Activated naive CD4-positive, alpha-beta T cell treated with anti-CD3 and anti-CD28 coated beads, Interleukin-2, amount 10 ng/mL, durations not matched to agents 7 days and 5 days (primary cell): ENCODE measurements at regions of chr11 and their contacts with region 1.

Region 1: GRCh38 chr11:75445315-75445953 is 12.4 kb upstream of the KLHL35 start:
- DNase-seq: peak; percentile 82
- H3K4me3 Mint-ChIP-seq: no peak overlapping the region
- H3K27ac Mint-ChIP-seq: no peak overlapping the region
- H3K4me1 Mint-ChIP-seq: no peaks in the 10 kb centered on the region
- H3K27me3 Mint-ChIP-seq: peaks cover 10% of the 10 kb centered on the region

Region 2: GRCh38 chr11:75462117-75462812 is 16.8 kb after region 1 on chr11:
- CTCF ChIA-PET with region 1: interaction called, 10 read pairs
- DNase-seq: no peak
- H3K4me3 Mint-ChIP-seq: no peak overlapping the region
- H3K27ac Mint-ChIP-seq: no peak overlapping the region
- H3K4me1 Mint-ChIP-seq: no peaks in the 10 kb centered on the region
- H3K27me3 Mint-ChIP-seq: no peaks in the 10 kb centered on the region

Region 3: DNA sequence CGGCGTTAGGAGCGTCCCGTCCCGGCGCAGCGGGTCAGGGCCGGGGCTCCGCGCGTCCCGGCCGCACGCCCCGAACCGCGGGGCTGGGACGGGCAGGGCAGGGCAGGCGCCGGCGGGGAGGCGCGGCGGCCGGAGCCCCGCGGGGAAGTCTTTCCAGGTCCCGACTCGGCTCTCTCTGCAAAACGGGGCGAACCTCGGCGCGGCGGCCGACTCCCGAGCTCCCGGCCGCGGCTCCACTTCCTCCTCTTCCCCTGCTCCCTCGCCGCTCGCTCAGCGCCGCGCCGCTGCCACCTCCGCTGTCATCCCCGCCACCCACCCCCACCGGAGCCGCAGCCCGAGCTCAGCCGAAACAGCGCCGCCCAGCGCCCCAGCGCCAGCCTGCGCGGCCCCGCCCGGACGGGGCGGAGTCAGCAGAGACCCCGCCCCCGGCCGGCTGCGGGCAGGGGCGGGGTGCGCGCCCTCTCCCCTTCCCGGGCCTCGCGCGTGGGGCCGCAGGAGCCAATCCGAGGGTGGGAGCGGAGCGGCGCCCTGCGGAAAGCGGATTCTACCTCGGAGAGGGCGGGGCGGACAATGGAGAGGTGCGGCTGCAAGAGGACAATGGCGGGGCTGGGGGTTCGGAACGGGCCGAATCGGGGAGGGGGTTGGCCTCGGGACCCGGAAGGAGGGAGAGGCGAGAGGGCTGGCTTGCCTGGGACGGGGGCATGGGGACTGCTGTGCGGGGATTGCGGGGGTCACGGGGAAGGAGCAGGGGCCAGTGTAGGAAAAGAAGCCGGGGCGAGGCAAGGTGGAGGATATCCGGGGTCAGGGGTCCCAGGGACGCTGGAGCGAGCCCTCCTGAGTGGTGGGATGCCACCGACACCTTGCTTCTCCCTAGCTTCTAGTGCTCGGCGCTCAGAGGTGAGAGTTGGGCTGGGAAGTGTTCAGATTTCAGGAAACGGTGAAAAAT is 80.4 kb after region 1 on chr11 and contains the start of gene GDPD5:
- CTCF ChIA-PET with region 1: interaction called, 174 read pairs
- DNase-seq: peak; percentile 96
- H3K4me3 Mint-ChIP-seq: peak within 1 kb of the TSS; percentile 86
- H3K27ac Mint-ChIP-seq: peak within 1 kb of the TSS; percentile 75
- H3K4me1 Mint-ChIP-seq: peaks cover 39% of the 10 kb centered on the region
- H3K27me3 Mint-ChIP-seq: peaks cover 60% of the 10 kb centered on the region

Region 4: DNA sequence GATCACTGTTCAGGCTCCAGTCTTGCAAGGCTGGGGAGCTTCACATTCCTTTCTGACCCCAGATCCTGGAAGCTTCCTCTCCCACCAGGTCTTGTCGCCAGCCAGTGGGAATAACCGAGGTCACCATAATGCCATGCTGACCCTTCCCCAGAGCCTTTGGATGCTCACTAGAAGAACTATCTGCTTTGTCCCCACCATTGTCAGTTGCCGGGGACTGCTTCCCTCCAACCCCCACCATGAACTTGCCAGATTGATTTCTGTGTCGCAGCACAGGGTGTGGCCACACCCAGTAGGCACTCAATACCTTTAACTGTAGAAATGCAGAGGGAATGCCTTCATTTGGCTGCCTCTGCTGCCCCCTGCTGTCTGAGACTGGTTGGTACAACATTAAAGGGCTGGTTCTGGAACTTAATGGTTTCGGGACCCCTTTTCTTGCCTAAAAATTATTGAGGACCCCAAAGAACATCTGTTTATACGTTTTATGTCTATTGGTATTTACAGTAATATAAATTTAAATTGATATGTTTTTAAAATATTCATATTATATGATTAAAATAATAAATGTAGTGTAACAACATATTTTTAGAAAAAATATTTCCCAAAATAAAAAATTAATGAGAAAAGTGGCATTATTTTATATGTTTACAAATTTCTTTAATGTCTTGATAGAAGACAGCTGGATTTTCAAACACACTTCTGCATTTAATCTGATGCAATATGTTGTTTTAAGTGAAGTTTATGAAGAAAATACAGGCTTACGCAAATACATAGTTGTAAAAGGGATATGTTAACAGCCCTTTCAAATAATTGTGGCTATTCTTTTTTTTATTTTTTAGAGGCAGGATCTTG is 87.0 kb after region 1 on chr11:
- CTCF ChIA-PET with region 1: interaction called, 174 read pairs
- DNase-seq: peak; percentile 89
- H3K4me3 Mint-ChIP-seq: no peak overlapping the region
- H3K27ac Mint-ChIP-seq: peak overlapping the region; percentile 19
- H3K4me1 Mint-ChIP-seq: peaks cover 64% of the 10 kb centered on the region
- H3K27me3 Mint-ChIP-seq: peaks cover 26% of the 10 kb centered on the region

Region 5: GRCh38 chr11:75878933-75879332 is 433.5 kb after region 1 on chr11:
- CTCF ChIA-PET with region 1: no interaction called
- DNase-seq: no peak
- H3K4me3 Mint-ChIP-seq: no peak overlapping the region
- H3K27ac Mint-ChIP-seq: no peak overlapping the region
- H3K4me1 Mint-ChIP-seq: no peaks in the 10 kb centered on the region
- H3K27me3 Mint-ChIP-seq: no peaks in the 10 kb centered on the region